K562 (cell line): ENCODE measurements at regions of chr1 and their contacts with region 1.

Region 1: GRCh38 chr1:201655243-201655642 is 116.3 kb downstream of the NAV1 start:
- DNase-seq: peak; percentile 70 to 78 (median 76)
- ATAC-seq: peak; percentile 81
- H3K4me3 ChIP-seq: no peak overlapping the region
- H3K27ac ChIP-seq: no peak overlapping the region
- H3K4me1 ChIP-seq: peaks cover 5 to 35% of the 10 kb centered on the region in 2 experiments
- H3K27me3 ChIP-seq: no peaks in the 10 kb centered on the region
- CTCF ChIP-seq: peak; percentile 17 to 36 (median 34); a peak in 3 of 6 replicates
- EP300 ChIP-seq: no peak
- POLR2A ChIP-seq: no peak
- RAD21 ChIP-seq: peak in 1 of 2 experiments; percentile 42; a peak in 2 of 4 replicates

Region 2: GRCh38 chr1:201676197-201676596 is 21.0 kb after region 1 on chr1:
- CTCF ChIA-PET with region 1: no interaction called
- POLR2A ChIA-PET with region 1: interaction called, 11 read pairs
- in situ Hi-C with region 1: no loop called
- intact Hi-C with region 1: no loop called
- DNase-seq: peak in 1 of 4 experiments; percentile 28
- ATAC-seq: peak; percentile 67
- H3K4me3 ChIP-seq: no peak overlapping the region
- H3K27ac ChIP-seq: no peak overlapping the region
- H3K4me1 ChIP-seq: peaks cover 3 to 18% of the 10 kb centered on the region in 2 experiments; a peak in 4 of 5 replicates
- H3K27me3 ChIP-seq: 0 out of 5 replicates have a peak, but pooled peaks cover 0 to 3% of the 10 kb centered on the region in 2 experiments
- CTCF ChIP-seq: no peak
- EP300 ChIP-seq: no peak
- POLR2A ChIP-seq: no peak
- RAD21 ChIP-seq: no peak

Region 3: GRCh38 chr1:201686714-201687455 is 31.6 kb after region 1 on chr1:
- CTCF ChIA-PET with region 1: no interaction called
- POLR2A ChIA-PET with region 1: no interaction called
- in situ Hi-C with region 1: no loop called
- intact Hi-C with region 1: no loop called
- DNase-seq: no peak
- ATAC-seq: peak; percentile 60
- H3K4me3 ChIP-seq: no peak overlapping the region
- H3K27ac ChIP-seq: no peak overlapping the region
- H3K4me1 ChIP-seq: peaks cover 0 to 7% of the 10 kb centered on the region in 2 experiments; a peak in 2 of 5 replicates
- H3K27me3 ChIP-seq: peaks cover 0 to 3% of the 10 kb centered on the region in 2 experiments; a peak in 2 of 5 replicates
- CTCF ChIP-seq: no peak
- EP300 ChIP-seq: no peak
- POLR2A ChIP-seq: no peak
- RAD21 ChIP-seq: no peak

Region 4: GRCh38 chr1:201703621-201704439 is 48.6 kb after region 1 on chr1:
- CTCF ChIA-PET with region 1: no interaction called
- POLR2A ChIA-PET with region 1: no interaction called
- in situ Hi-C with region 1: no loop called
- intact Hi-C with region 1: loop called (anchors 2 kb)
- DNase-seq: peak; percentile 90 to 96 (median 94)
- ATAC-seq: peak; percentile 98
- H3K4me3 ChIP-seq: no peak overlapping the region
- H3K27ac ChIP-seq: no peak overlapping the region
- H3K4me1 ChIP-seq: peaks cover 11 to 15% of the 10 kb centered on the region in 2 experiments
- H3K27me3 ChIP-seq: peaks cover 0 to 4% of the 10 kb centered on the region in 2 experiments; a peak in 1 of 5 replicates
- CTCF ChIP-seq: peak; percentile 98 to 99 (median 99)
- EP300 ChIP-seq: peak; percentile 21; the same call in 1 of the 2 replicates
- POLR2A ChIP-seq: no peak
- RAD21 ChIP-seq: peak; percentile 100

Region 5: DNA sequence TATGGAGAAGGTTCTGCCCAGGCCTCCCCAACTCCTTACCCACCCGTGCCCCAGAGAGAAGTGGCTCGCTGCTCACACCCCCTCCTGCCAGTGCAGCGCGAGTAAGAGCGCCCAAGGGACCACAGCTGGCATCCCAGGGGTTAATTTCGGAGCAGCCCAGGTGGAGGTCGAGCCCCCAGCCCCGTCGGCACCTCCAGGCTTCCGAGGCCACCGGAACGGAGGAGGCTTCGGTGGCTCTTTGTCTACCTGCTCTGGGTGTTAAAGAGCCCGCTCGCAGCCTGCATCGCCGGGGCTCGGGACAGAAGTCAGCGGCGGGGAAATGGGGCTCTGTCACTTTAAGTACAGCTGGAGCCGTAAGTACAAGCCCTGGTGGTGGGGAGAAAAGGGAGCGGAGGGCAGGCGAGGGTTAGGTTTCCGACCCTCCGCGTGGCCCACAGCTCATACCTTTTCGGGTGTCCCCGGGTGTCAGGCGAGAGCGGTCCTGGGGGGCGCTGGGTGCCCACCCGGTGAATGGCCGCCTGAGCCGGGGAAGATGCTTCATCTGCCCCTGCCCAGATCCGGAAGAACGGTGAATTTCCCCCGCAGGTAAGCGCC is 84.3 kb after region 1 on chr1:
- CTCF ChIA-PET with region 1: no interaction called
- POLR2A ChIA-PET with region 1: no interaction called
- in situ Hi-C with region 1: no loop called
- intact Hi-C with region 1: no loop called
- DNase-seq: peak in 1 of 4 experiments; percentile 27
- ATAC-seq: peak; percentile 82
- H3K4me3 ChIP-seq: no peak overlapping the region
- H3K27ac ChIP-seq: no peak overlapping the region
- H3K4me1 ChIP-seq: peaks cover 4 to 14% of the 10 kb centered on the region in 2 experiments; a peak in 4 of 5 replicates
- H3K27me3 ChIP-seq: peaks cover 17 to 45% of the 10 kb centered on the region in 2 experiments
- CTCF ChIP-seq: 0 out of 6 replicates have a peak, but pooled peaks of 1 of the 3 experiments have one; percentile 3
- EP300 ChIP-seq: no peak
- POLR2A ChIP-seq: no peak
- RAD21 ChIP-seq: no peak